Heart right ventricle (tissue), 16 donors: ENCODE measurements at regions of chrX and their contacts with region 1.

Region 1: DNA sequence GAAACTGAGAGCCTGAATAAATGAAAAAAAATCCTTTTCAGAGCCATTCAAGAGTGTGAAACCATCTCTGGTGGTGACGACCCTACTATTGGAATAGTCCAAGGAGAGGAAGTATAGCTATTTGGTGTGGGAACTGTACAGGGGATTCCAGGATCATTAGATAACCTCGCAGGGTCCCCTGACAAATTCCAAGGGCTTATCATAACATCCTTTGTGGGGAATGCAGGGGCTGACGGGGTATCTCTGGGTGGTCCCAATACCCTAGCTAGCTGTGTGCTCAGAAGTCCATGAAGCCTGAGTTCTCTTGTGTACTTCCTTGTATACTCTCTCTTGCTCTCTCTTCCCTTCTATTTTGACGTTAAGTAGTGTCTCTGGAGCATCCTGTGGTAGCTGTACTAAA is 13.8 kb upstream of the PLAC1 start:
- DNase-seq: no peak
- ATAC-seq: no peak
- H3K4me3 ChIP-seq: no peak overlapping the region
- H3K27ac ChIP-seq: peak overlapping the region in 1 of 10 donors; percentile 31
- H3K4me1 ChIP-seq: peaks cover 0 to 7% (median 0%) of the 10 kb centered on the region in 9 donors
- H3K27me3 ChIP-seq: peaks cover 0 to 16% (median 0%) of the 10 kb centered on the region in 7 donors
- CTCF ChIP-seq: no peak

Region 2: DNA sequence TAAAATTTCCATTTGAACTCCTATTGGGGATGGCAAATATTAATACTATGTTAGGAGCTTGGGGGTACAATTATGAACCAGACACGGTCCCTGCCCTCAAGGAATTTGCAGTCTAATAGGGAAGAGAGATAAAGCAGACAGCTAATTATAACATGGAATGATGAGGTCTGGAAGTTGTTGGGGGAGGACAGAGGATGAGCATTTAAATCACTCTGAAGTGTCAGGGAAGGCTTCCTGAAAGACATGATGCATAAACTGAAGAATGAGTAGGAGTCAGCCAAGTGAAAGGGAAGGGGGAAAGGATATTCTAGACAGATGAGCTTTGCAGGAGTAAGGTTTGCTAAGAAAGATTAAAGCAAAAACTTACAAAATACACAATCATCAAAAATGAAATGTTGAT is 29.7 kb before region 1 on chrX:
- intact Hi-C with region 1: loop called in 1 of 10 experiments (anchors 1 kb)
- DNase-seq: no peak
- ATAC-seq: no peak
- H3K4me3 ChIP-seq: no peak overlapping the region
- H3K27ac ChIP-seq: no peak overlapping the region
- H3K4me1 ChIP-seq: no peaks in the 10 kb centered on the region
- H3K27me3 ChIP-seq: peaks cover 0 to 29% (median 0%) of the 10 kb centered on the region in 7 donors
- CTCF ChIP-seq: no peak